Pancreas (tissue), 10 donors: ENCODE measurements at regions of chr15 and their contacts with region 1.

Region 1: GRCh38 chr15:69523010-69524001 is 70.7 kb downstream of the RPLP1 start:
- DNase-seq: peak; percentile 66 to 90 (median 80)
- ATAC-seq: peak; percentile 80 to 97 (median 93)
- H3K4me3 ChIP-seq: no peak overlapping the region
- H3K27ac ChIP-seq: no peak overlapping the region
- H3K4me1 ChIP-seq: no peaks in the 10 kb centered on the region
- H3K27me3 ChIP-seq: no peaks in the 10 kb centered on the region
- CTCF ChIP-seq: peak; percentile 49 to 66 (median 56)

Region 2: GRCh38 chr15:69893863-69894262 is 370.6 kb after region 1 on chr15:
- intact Hi-C with region 1: loop called in 1 of 3 experiments (anchors 10 kb)
- DNase-seq: no peak
- ATAC-seq: peak in 1 of 4 donors; percentile 59
- H3K4me3 ChIP-seq: no peak overlapping the region
- H3K27ac ChIP-seq: no peak overlapping the region
- H3K4me1 ChIP-seq: no peaks in the 10 kb centered on the region
- H3K27me3 ChIP-seq: no peaks in the 10 kb centered on the region
- CTCF ChIP-seq: no peak